ENCODE measurements at regions of chr4 and their contacts with region 1.

Region 1: GRCh38 chr4:21765810-21766407 is 182.7 kb downstream of the KCNIP4 start:
- DNase-seq: peak; percentile 60
- H3K4me3 ChIP-seq: no peak overlapping the region
- H3K27ac ChIP-seq: no peak overlapping the region
- H3K4me1 ChIP-seq: no peaks in the 10 kb centered on the region
- H3K27me3 ChIP-seq: no peaks in the 10 kb centered on the region
- CTCF ChIP-seq: peak; percentile 64 to 84 (median 82)
- POLR2A ChIP-seq: no peak

Region 2: DNA sequence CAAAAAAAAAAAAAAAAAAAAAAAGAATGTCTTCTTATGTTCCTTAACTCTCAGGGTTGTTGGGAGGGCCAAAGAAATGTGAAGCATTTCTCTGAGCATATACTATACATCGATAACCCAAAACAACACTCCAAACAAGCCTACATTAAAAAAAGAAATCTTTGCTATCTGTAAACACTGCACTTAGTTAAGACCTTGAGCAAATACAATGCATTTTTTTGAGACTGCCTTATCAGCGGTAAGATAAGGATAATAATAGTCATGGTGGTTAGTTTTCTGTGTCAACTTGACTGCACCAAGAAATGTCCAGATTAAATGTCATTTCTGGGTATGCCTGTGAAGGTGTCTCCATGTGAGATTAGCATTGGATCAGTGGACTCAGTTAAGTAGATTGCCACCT is 523.7 kb before region 1 on chr4:
- intact Hi-C with region 1: no loop called
- DNase-seq: no peak
- H3K4me3 ChIP-seq: no peak overlapping the region
- H3K27ac ChIP-seq: no peak overlapping the region
- H3K4me1 ChIP-seq: no peaks in the 10 kb centered on the region
- H3K27me3 ChIP-seq: no peaks in the 10 kb centered on the region
- CTCF ChIP-seq: no peak
- POLR2A ChIP-seq: no peak

Region 3: DNA sequence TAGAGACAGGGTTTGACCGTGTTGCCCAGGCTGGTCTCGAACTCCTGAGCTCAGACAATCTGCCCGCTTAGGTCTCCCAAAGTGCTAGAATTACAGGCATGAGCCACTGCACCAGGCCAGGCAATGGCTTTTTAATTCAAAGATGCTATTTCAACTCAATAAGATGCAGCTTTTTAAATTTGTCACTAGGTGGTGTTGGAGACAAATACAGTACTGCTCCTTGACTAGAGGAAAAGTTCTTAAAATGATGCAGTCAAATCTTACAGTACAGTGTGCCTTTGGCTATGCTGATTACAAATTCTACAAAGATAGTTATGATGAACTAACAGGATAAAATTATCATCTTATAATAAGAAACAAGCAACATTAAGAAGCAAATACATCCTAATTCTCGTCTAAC is 258.5 kb before region 1 on chr4:
- intact Hi-C with region 1: loop called (anchors 10 kb)
- DNase-seq: no peak
- H3K4me3 ChIP-seq: no peak overlapping the region
- H3K27ac ChIP-seq: no peak overlapping the region
- H3K4me1 ChIP-seq: no peaks in the 10 kb centered on the region
- H3K27me3 ChIP-seq: no peaks in the 10 kb centered on the region
- CTCF ChIP-seq: no peak
- POLR2A ChIP-seq: no peak

Region 4: GRCh38 chr4:21664355-21664754 is 101.6 kb before region 1 on chr4:
- intact Hi-C with region 1: no loop called
- DNase-seq: no peak
- H3K4me3 ChIP-seq: no peak overlapping the region
- H3K27ac ChIP-seq: no peak overlapping the region
- H3K4me1 ChIP-seq: no peaks in the 10 kb centered on the region
- H3K27me3 ChIP-seq: no peaks in the 10 kb centered on the region
- CTCF ChIP-seq: no peak
- POLR2A ChIP-seq: no peak

Region 5: DNA sequence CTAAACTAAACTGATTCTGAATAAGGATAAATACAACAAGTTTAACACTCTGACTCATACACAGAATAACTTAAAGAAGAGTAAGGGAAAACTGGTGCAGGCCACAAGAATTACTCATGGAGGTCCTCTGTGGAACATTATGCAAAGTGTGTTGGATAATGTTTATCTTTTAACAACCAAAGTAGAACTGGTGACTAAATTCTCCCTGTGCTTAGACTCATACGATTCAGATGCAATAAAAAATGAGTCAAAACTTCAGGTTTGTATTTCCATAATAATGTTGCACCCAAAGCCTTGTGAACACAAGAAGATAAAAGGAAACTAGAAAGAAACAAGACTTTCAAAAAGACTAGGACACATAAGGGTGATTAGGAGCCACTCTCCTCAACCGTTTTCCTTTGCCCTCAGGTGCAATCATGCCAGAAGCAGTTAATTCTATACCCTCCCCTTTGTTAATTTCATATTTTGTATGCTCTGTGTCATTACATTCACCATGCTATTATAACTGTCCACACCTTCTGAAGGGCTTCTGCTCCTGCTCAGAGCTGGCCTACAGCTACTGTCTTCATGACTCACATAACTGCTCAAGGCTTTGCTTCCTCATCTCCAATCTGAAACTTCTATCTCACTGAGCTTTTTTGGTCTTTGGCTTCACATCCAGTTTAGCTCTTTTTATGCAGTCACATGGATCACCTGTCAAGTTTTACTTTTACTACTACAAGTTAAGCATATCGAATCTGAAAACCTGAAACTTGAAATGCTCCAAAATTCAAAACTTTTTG is 122.5 kb after region 1 on chr4:
- intact Hi-C with region 1: no loop called
- DNase-seq: no peak
- H3K4me3 ChIP-seq: no peak overlapping the region
- H3K27ac ChIP-seq: no peak overlapping the region
- H3K4me1 ChIP-seq: no peaks in the 10 kb centered on the region
- H3K27me3 ChIP-seq: no peaks in the 10 kb centered on the region
- CTCF ChIP-seq: no peak
- POLR2A ChIP-seq: no peak